ENCODE measurements at regions of chr16 and their contacts with region 1.

Region 1: DNA sequence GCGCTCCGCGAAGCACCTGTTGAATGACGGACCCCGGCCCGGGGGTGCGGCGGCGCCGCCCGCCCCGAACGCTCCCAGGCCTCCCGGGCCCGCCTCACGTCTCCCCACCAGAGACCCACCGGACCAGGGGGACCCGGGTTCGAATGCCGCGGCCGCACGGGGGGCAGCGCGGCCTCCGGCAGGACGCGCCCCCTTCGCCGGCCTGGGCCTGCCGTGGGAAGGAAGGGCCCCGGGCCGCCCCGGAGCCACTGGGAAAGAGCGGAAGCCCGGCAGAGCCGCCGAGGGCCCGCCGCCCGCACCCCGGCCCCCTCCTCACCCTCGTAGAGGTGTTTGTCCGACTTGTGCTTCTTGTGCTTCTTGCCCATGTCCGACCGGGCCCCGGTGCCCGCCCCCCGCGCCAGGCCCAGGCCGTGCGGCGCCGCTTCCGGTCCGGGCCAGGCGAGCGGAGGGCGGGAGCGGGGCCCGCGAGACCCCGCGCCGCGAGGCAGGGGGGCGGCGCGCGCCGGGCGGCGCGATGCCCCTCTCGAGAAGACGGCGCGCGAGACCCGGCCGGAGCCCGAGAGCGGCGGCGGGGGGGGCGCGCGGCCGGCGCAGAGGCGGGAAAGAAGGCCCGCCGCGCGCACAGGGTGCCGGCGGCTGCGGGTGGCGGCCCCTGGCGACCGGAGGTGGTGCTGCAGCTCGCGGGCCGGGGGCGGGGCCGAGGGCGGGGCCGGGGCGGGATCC is at the start of gene BRD7:
- DNase-seq: no peak
- ATAC-seq: peak; percentile 82
- H3K4me3 ChIP-seq: peak within 1 kb of the TSS; percentile 91
- H3K27ac ChIP-seq: peak within 1 kb of the TSS; percentile 54
- H3K4me1 ChIP-seq: no peaks in the 10 kb centered on the region; the same call in 1 of the 2 replicates
- H3K27me3 ChIP-seq: no peaks in the 10 kb centered on the region
- CTCF ChIP-seq: peak in 2 of 3 experiments; percentile 42 to 52; a peak in 3 of 6 replicates
- EP300 ChIP-seq: no peak
- POLR2A ChIP-seq: peak; percentile 49; the same call in 1 of the 2 replicates
- RAD21 ChIP-seq: no peak; the same call in 1 of the 2 replicates
- polyA plus RNA-seq, gene BRD7: 16.9 to 36.5 TPM

Region 2: GRCh38 chr16:50509521-50510341 is 141.2 kb after region 1 on chr16:
- CTCF ChIA-PET with region 1: interaction called, 4 read pairs
- POLR2A ChIA-PET with region 1: no interaction called
- RAD21 ChIA-PET with region 1: no interaction called
- SMC1A ChIA-PET with region 1: no interaction called
- in situ Hi-C with region 1: no loop called
- intact Hi-C with region 1: loop called (anchors 10 kb)
- DNase-seq: no peak
- ATAC-seq: peak; percentile 32; the same call in 2 of the 3 replicates
- H3K4me3 ChIP-seq: no peak overlapping the region
- H3K27ac ChIP-seq: no peak overlapping the region
- H3K4me1 ChIP-seq: no peaks in the 10 kb centered on the region
- H3K27me3 ChIP-seq: no peaks in the 10 kb centered on the region; a peak in 1 of 4 replicates
- CTCF ChIP-seq: peak; percentile 64 to 88 (median 84)
- EP300 ChIP-seq: no peak
- POLR2A ChIP-seq: no peak
- RAD21 ChIP-seq: peak; percentile 79